ENCODE measurements at regions of chr6 and their contacts with region 1.

Region 1: GRCh38 chr6:158026054-158026900 is 44.6 kb downstream of the SYNJ2 start:
- DNase-seq: peak; percentile 61
- ATAC-seq: peak; percentile 87
- H3K4me3 Mint-ChIP-seq: no peak overlapping the region
- H3K27ac Mint-ChIP-seq: no peak overlapping the region; the same call in 1 of the 2 replicates
- H3K4me1 Mint-ChIP-seq: peaks cover 26% of the 10 kb centered on the region
- H3K27me3 Mint-ChIP-seq: no peaks in the 10 kb centered on the region
- CTCF ChIP-seq: peak; percentile 55

Region 2: DNA sequence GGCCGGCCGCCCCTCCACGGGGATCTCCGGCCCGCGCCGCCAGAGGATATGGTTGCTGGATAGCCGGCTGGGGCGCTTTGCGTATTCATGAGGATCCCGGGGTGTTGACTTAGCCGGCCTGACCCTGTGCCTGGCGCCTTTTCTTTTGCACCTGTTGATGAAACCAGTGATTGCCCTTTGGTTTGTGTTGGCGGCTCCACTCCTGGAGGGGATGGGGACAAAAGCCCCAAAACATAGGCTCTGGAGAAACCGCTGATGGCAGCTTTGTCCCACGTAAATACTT is 44.0 kb before region 1 on chr6:
- CTCF ChIA-PET with region 1: interaction called, 15 read pairs
- POLR2A ChIA-PET with region 1: interaction called, 3 read pairs
- DNase-seq: peak; percentile 72
- ATAC-seq: peak; percentile 36
- H3K4me3 Mint-ChIP-seq: peak overlapping the region; percentile 70
- H3K27ac Mint-ChIP-seq: peak overlapping the region; percentile 86
- H3K4me1 Mint-ChIP-seq: peaks cover 53% of the 10 kb centered on the region
- H3K27me3 Mint-ChIP-seq: peaks cover 28% of the 10 kb centered on the region
- CTCF ChIP-seq: no peak

Region 3: DNA sequence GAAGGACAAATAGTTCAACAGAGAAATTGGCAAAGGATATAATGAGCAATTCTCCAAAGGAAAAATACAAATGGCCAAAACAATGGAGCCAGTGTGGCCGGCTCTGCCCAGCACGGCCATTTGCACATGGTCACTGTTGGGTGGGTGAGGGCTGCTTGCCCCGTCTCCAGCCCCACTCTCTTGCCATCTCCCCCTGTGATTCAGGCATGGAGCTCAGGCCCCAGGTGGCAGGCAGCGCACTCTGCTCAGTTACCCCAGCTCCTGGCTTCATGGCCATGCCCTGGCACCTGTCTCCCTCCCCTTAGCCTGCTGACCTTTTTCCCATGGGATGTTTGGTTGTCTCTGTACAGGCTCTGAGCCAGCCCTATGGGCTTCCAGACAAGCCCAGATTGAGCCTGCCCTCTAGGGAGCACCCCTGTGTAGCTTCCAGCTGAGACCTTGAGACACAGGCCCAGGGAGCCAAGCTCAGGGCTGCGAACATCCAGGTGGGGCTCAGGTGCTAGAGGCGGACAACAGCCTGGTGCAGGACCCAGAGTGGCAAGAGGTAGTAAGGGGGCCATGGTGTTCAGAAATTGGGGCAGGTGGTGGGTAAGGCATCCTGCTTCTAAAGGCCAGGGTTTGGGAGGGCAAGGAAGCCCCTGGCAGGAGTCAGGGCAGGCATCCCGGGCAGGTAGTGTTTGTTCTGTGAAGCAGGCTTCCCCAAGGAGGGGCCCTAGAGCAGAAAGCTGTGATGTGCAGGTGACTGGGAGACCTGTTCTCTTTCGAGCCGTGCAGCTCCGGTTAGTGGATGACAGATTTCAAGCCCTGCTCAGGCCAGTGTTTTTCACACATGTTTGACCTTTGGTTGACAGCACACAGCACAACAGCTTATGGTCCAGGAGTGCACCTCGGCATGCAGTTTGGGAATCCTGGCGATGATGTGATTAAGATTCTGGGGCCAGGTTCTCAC is 26.9 kb before region 1 on chr6:
- CTCF ChIA-PET with region 1: interaction called, 17 read pairs
- POLR2A ChIA-PET with region 1: no interaction called
- DNase-seq: no peak
- ATAC-seq: no peak; the same call in 1 of the 2 replicates
- H3K4me3 Mint-ChIP-seq: no peak overlapping the region
- H3K27ac Mint-ChIP-seq: peak overlapping the region; percentile 34; the same call in 1 of the 2 replicates
- H3K4me1 Mint-ChIP-seq: peaks cover 58% of the 10 kb centered on the region
- H3K27me3 Mint-ChIP-seq: no peaks in the 10 kb centered on the region
- CTCF ChIP-seq: no peak

Region 4: GRCh38 chr6:158009114-158009891 is 17.0 kb before region 1 on chr6:
- CTCF ChIA-PET with region 1: interaction called, 10 read pairs
- POLR2A ChIA-PET with region 1: interaction called, 3 read pairs
- DNase-seq: no peak
- ATAC-seq: no peak
- H3K4me3 Mint-ChIP-seq: no peak overlapping the region
- H3K27ac Mint-ChIP-seq: peak overlapping the region; percentile 69; the same call in 1 of the 2 replicates
- H3K4me1 Mint-ChIP-seq: peaks cover 7% of the 10 kb centered on the region
- H3K27me3 Mint-ChIP-seq: no peaks in the 10 kb centered on the region
- CTCF ChIP-seq: no peak

Region 5: GRCh38 chr6:158040051-158040803 is 13.9 kb after region 1 on chr6:
- CTCF ChIA-PET with region 1: interaction called, 13 read pairs
- POLR2A ChIA-PET with region 1: interaction called, 3 read pairs
- DNase-seq: no peak
- ATAC-seq: no peak
- H3K4me3 Mint-ChIP-seq: no peak overlapping the region
- H3K27ac Mint-ChIP-seq: peak overlapping the region; percentile 55
- H3K4me1 Mint-ChIP-seq: peaks cover 13% of the 10 kb centered on the region
- H3K27me3 Mint-ChIP-seq: no peaks in the 10 kb centered on the region; the same call in 1 of the 2 replicates
- CTCF ChIP-seq: no peak

Region 6: GRCh38 chr6:158072083-158072721 is 45.9 kb after region 1 on chr6:
- CTCF ChIA-PET with region 1: interaction called, 12 read pairs
- POLR2A ChIA-PET with region 1: no interaction called
- DNase-seq: peak; percentile 75
- ATAC-seq: peak; percentile 79
- H3K4me3 Mint-ChIP-seq: no peak overlapping the region
- H3K27ac Mint-ChIP-seq: peak overlapping the region; percentile 61; the same call in 1 of the 2 replicates
- H3K4me1 Mint-ChIP-seq: peaks cover 12% of the 10 kb centered on the region
- H3K27me3 Mint-ChIP-seq: no peaks in the 10 kb centered on the region
- CTCF ChIP-seq: peak; percentile 83

Region 7: DNA sequence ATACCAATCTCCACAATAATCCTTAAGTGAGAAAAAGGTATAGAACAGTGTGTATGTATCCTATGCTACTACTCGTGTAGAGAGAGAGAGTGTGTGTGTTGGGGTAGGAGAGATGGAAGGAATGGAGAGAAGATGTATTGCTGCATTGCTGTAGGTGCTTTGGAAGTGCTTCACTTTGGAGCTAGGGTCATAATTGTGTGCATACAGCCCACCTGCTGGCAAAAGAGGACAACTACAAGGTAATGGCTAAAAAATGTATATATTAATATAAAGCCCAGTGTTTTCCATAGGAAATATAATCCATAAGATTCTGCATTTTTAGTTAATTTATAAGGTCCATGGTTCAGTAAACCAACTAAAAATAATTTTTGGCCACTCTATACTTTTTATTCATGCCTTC is 105.6 kb after region 1 on chr6:
- CTCF ChIA-PET with region 1: no interaction called
- POLR2A ChIA-PET with region 1: no interaction called
- DNase-seq: no peak
- ATAC-seq: no peak; the same call in 1 of the 2 replicates
- H3K4me3 Mint-ChIP-seq: no peak overlapping the region
- H3K27ac Mint-ChIP-seq: no peak overlapping the region
- H3K4me1 Mint-ChIP-seq: no peaks in the 10 kb centered on the region
- H3K27me3 Mint-ChIP-seq: no peaks in the 10 kb centered on the region
- CTCF ChIP-seq: no peak

Region 8: DNA sequence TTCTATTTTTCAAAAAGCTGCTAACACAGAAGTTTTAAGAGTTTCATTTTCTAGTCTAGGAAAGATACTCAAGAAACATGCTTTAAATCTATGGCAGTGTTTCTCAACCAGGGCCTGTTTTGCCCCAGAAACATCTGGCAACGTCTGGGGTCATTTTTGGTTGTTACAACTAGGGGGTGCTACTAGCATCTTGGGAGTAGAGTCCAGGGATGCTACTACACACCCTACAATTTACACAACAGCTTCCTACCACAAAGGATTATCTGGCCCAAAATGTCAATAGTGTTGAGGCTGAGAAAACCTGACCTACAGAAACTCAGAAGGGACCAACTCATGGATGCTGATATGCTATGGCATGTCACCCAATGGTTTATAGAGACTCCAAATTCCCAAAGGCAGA is 117.4 kb after region 1 on chr6:
- CTCF ChIA-PET with region 1: no interaction called
- POLR2A ChIA-PET with region 1: no interaction called
- DNase-seq: peak; percentile 36
- ATAC-seq: peak; percentile 81
- H3K4me3 Mint-ChIP-seq: no peak overlapping the region
- H3K27ac Mint-ChIP-seq: no peak overlapping the region
- H3K4me1 Mint-ChIP-seq: no peaks in the 10 kb centered on the region
- H3K27me3 Mint-ChIP-seq: no peaks in the 10 kb centered on the region
- CTCF ChIP-seq: peak; percentile 27; the same call in 1 of the 2 replicates

Region 9: DNA sequence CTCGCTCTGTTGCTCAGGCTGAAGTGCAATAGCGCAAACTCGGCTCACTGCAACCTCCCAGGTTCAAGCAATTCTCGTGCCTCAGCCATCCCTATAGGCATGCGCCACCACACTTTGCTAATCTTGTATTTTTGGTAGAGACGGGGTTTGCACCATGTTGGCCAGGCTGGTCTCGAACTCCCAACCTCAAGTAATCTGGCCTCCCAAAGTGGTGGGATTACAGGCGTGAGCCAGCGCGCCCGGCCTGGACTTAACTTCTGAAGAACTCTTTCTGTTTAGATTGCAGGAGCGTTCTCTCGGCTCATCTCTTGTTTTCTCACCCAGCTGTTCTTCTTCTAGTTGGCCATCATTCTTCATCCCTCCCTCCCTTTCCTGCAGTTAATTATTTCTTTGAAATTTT is 172.2 kb after region 1 on chr6:
- CTCF ChIA-PET with region 1: no interaction called
- POLR2A ChIA-PET with region 1: no interaction called
- DNase-seq: no peak
- ATAC-seq: no peak
- H3K4me3 Mint-ChIP-seq: no peak overlapping the region
- H3K27ac Mint-ChIP-seq: no peak overlapping the region
- H3K4me1 Mint-ChIP-seq: peaks cover 65% of the 10 kb centered on the region
- H3K27me3 Mint-ChIP-seq: no peaks in the 10 kb centered on the region
- CTCF ChIP-seq: no peak